Caco-2 (cell line): ENCODE measurements at regions of chr9 and their contacts with region 1.

Region 1: DNA sequence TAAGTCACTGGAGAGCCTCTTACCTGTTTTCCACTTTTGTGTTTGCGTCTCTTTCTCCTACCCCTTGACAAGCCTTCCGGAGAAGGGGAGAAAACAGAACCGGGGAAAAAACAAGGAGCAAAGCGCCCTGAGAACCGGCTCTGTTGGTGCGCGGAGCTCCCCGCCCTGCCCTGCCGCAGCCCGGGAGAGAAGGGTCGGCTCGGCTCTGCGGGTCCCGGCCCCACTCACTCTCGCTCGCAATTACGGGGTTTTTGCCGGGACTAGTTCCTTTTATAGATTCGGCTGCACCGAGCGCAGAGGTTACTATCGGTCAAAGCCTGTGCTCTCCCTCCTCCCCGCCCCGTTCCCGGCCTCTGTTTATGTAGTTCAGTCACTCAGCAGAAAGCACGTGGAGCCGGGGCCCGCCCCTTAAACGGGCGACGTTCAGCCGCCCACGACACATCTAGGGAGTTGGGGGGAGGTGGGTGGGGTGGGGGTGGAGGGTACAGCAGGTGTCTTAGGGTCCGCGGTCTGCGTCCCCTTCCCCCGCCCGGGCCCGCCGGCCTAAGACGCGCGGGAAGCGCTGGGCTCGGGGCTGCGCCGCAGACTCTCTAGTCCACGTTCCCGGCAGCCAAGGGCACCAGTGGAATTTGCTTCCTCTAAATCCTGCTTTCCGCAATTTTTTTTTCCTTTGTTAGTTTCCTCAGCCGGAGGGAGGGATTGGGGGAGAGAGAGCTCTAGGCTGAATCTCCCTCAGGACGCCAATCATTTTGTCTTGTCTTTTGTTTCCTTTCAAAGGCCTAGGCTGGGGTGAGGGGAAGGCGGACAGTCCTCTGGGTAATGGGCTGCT is at the start of gene ABCA1:
- DNase-seq: peak; percentile 80 to 85
- H3K4me3 ChIP-seq: peak within 1 kb of the TSS; percentile 73
- H3K4me3 Mint-ChIP-seq: peak within 1 kb of the TSS; percentile 94
- H3K27ac Mint-ChIP-seq: peak within 1 kb of the TSS; percentile 51
- H3K4me1 ChIP-seq: peaks cover 9% of the 10 kb centered on the region
- H3K4me1 Mint-ChIP-seq: peaks cover 13% of the 10 kb centered on the region
- H3K27me3 ChIP-seq: no peaks in the 10 kb centered on the region
- H3K27me3 Mint-ChIP-seq: no peaks in the 10 kb centered on the region
- CTCF ChIP-seq: no peak
- total RNA-seq, gene ABCA1: 14.0 and 20.7 TPM in 2 replicates

Region 2: GRCh38 chr9:104572612-104573011 is 355.5 kb before region 1 on chr9:
- CTCF ChIA-PET with region 1: no interaction called
- POLR2A ChIA-PET with region 1: no interaction called
- intact Hi-C with region 1: no loop called
- DNase-seq: no peak
- H3K4me3 ChIP-seq: no peak overlapping the region
- H3K4me3 Mint-ChIP-seq: no peak overlapping the region
- H3K27ac Mint-ChIP-seq: no peak overlapping the region
- H3K4me1 ChIP-seq: no peaks in the 10 kb centered on the region
- H3K4me1 Mint-ChIP-seq: no peaks in the 10 kb centered on the region
- H3K27me3 ChIP-seq: no peaks in the 10 kb centered on the region
- H3K27me3 Mint-ChIP-seq: no peaks in the 10 kb centered on the region
- CTCF ChIP-seq: no peak

Region 3: GRCh38 chr9:104863180-104863883 is 64.8 kb before region 1 on chr9:
- CTCF ChIA-PET with region 1: interaction called, 10 read pairs
- POLR2A ChIA-PET with region 1: no interaction called
- intact Hi-C with region 1: loop called (anchors 1 kb)
- DNase-seq: peak; percentile 62 to 69
- H3K4me3 ChIP-seq: no peak overlapping the region
- H3K4me3 Mint-ChIP-seq: no peak overlapping the region
- H3K27ac Mint-ChIP-seq: no peak overlapping the region
- H3K4me1 ChIP-seq: 0 out of 2 replicates have a peak, but pooled peaks cover 11% of the 10 kb centered on the region
- H3K4me1 Mint-ChIP-seq: peaks cover 19% of the 10 kb centered on the region
- H3K27me3 ChIP-seq: no peaks in the 10 kb centered on the region
- H3K27me3 Mint-ChIP-seq: no peaks in the 10 kb centered on the region
- CTCF ChIP-seq: peak; percentile 68 to 85

Region 4: DNA sequence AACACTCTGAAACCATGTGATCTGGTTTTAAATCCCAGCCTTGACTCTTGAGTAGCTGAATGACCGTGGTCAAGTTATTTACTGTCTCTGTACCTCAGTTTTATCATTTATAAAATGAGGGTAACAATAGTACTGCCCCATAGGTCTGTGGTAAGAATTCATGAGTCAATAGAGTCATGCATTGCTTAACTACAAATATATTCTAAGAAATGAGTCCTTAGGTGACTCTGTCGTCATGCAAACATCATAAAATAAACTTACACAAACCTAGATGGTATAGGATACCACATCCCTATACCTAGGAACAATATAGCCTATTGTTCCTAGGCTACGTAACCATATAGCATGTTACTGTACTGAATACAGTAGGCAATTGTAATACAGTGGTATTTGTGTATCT is 20.2 kb after region 1 on chr9:
- CTCF ChIA-PET with region 1: no interaction called
- POLR2A ChIA-PET with region 1: no interaction called
- intact Hi-C with region 1: no loop called
- DNase-seq: no peak
- H3K4me3 ChIP-seq: no peak overlapping the region
- H3K4me3 Mint-ChIP-seq: no peak overlapping the region
- H3K27ac Mint-ChIP-seq: no peak overlapping the region
- H3K4me1 ChIP-seq: no peaks in the 10 kb centered on the region; the same call in 1 of the 2 replicates
- H3K4me1 Mint-ChIP-seq: peaks cover 5% of the 10 kb centered on the region
- H3K27me3 ChIP-seq: no peaks in the 10 kb centered on the region
- H3K27me3 Mint-ChIP-seq: no peaks in the 10 kb centered on the region
- CTCF ChIP-seq: no peak

Region 5: DNA sequence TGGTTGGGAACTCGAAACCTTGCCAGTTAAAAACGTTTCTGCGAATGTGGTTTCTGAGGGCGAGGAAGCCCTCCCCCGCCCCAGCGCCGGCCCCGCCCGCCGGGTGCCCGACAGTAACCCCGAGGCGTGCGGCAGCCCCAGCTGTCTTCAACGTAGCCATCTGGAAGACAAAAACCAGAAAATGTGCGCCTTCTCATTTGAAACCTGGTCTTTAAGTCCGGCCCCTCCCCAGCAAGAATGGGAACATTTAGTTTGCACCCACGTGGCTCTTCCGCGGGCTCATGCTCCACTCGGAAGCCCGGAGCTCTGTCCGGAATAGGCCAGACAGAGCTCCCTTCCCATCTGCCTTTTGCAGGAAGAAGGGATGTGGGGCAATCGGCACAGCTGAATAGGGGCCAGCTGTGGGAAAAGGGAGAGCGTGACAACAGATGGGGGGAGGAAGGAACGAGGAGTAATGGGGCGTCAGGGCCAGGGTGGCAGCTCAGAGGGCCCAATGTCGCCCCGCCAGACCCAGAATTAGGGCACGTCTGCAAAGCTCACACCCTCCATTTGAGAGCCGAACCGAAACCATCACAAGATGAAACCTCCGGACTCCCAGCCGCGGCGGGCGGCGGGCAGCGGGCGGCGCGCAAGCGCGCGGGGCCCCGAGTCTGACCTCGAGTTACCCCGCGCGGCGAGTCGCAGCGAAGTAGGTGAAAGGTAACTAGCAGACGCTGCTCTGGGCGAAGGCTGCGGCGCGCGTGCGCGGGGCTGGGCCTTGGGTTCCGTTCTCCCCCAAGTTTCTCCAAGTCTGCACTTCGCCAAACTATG is 63.2 kb after region 1 on chr9:
- CTCF ChIA-PET with region 1: interaction called, 5 read pairs
- POLR2A ChIA-PET with region 1: interaction called, 7 read pairs
- intact Hi-C with region 1: loop called (anchors 1 kb)
- DNase-seq: peak; percentile 84 to 85
- H3K4me3 ChIP-seq: peak overlapping the region; percentile 68
- H3K4me3 Mint-ChIP-seq: peak overlapping the region; percentile 96
- H3K27ac Mint-ChIP-seq: peak overlapping the region; percentile 82
- H3K4me1 ChIP-seq: peaks cover 29% of the 10 kb centered on the region
- H3K4me1 Mint-ChIP-seq: peaks cover 17% of the 10 kb centered on the region
- H3K27me3 ChIP-seq: no peaks in the 10 kb centered on the region
- H3K27me3 Mint-ChIP-seq: no peaks in the 10 kb centered on the region
- CTCF ChIP-seq: no peak

Region 6: DNA sequence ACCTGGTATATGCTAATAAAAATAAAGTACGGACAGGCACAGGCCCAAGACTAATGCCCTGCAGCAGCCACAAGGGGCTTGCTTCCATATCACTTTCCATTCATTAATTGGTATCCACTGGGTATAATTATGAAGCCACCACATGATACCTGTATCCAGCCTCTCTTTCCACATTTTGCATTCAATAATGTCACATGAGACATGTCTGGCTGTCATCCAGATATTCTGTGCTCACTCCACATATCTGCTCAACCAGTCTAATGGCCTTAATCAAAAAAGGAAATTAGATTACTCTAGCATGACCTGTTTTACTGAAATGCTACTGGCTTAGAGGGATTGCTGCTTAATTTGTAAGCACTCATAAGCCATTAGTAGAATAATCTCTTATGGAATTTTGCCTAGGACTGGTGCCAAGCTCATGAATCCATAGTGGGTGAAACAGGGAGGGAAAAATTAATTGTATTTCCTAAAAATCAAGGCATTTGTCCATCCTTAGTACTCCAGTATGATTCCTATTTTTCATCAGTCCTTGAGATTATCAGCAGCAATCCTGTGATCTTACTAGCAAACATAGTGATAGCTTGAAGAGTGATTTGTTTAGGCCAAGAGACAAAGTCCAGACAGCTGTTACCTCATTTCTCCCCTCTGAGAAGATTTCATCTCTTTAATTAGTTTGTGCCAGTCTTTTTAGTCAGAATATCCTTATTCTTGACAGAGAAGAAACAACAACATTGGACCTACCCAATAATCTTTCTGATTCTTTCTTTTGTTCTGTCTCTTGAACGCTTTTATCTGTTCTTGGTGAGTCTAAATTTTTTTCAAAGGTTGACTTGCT is 119.0 kb after region 1 on chr9:
- CTCF ChIA-PET with region 1: no interaction called
- POLR2A ChIA-PET with region 1: no interaction called
- intact Hi-C with region 1: loop called (anchors 2 kb)
- DNase-seq: peak in 1 of 2 experiments; percentile 36
- H3K4me3 ChIP-seq: no peak overlapping the region
- H3K4me3 Mint-ChIP-seq: peak overlapping the region; percentile 9
- H3K27ac Mint-ChIP-seq: peak overlapping the region; percentile 12
- H3K4me1 ChIP-seq: peaks cover 34% of the 10 kb centered on the region
- H3K4me1 Mint-ChIP-seq: peaks cover 46% of the 10 kb centered on the region
- H3K27me3 ChIP-seq: no peaks in the 10 kb centered on the region
- H3K27me3 Mint-ChIP-seq: no peaks in the 10 kb centered on the region
- CTCF ChIP-seq: no peak

Region 7: GRCh38 chr9:105087910-105088888 is 160.1 kb after region 1 on chr9:
- CTCF ChIA-PET with region 1: interaction called, 3 read pairs
- POLR2A ChIA-PET with region 1: no interaction called
- intact Hi-C with region 1: loop called (anchors 1 kb)
- DNase-seq: peak; percentile 69 to 74
- H3K4me3 ChIP-seq: no peak overlapping the region
- H3K4me3 Mint-ChIP-seq: peak overlapping the region; percentile 37
- H3K27ac Mint-ChIP-seq: peak overlapping the region; percentile 84
- H3K4me1 ChIP-seq: peaks cover 48% of the 10 kb centered on the region
- H3K4me1 Mint-ChIP-seq: peaks cover 28% of the 10 kb centered on the region
- H3K27me3 ChIP-seq: no peaks in the 10 kb centered on the region
- H3K27me3 Mint-ChIP-seq: no peaks in the 10 kb centered on the region
- CTCF ChIP-seq: no peak

Region 8: DNA sequence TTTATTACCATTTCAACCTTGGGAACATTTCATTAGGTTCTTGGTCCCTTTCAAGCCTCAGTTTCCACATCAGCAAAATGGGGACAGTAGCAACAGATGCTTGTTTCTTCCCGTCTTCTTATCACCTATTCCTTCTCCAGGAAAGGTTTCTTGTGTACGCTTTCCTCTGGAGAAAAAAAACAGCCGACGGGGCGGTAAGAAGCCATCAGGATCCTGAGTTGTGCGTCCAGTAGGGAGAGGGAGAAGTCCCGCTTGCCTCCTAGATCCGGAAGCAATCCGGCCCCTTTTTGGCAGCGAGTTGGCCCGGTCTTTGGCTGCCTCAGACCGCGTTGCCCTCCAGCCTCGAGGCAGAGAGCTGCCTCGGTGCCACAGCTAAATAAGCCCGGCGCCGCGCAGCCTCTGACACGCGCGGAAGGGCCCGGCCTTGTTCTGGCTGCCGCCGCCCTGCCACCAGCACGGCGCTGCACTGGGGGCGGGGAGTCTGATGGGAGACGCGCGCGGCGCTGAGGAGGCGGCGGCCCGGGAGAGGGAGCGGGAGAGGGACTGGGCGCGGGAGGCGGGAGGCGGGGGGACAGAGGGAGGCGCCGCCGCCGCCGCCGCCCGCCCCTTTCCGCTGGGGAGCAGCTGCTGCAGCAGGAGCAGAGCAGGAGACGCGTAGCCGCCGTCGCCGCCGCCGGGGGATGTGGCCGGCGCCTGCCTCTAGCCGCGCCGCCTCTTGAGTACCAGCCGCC is 316.0 kb after region 1 on chr9 and contains the start of gene SLC44A1:
- CTCF ChIA-PET with region 1: interaction called, 3 read pairs
- POLR2A ChIA-PET with region 1: interaction called, 4 read pairs
- intact Hi-C with region 1: loop called (anchors 2 kb)
- DNase-seq: peak; percentile 97 to 98
- H3K4me3 ChIP-seq: peak within 1 kb of the TSS; percentile 76
- H3K4me3 Mint-ChIP-seq: peak within 1 kb of the TSS; percentile 97
- H3K27ac Mint-ChIP-seq: peak within 1 kb of the TSS; percentile 91
- H3K4me1 ChIP-seq: peaks cover 14% of the 10 kb centered on the region
- H3K4me1 Mint-ChIP-seq: peaks cover 23% of the 10 kb centered on the region
- H3K27me3 ChIP-seq: no peaks in the 10 kb centered on the region
- H3K27me3 Mint-ChIP-seq: no peaks in the 10 kb centered on the region
- CTCF ChIP-seq: no peak
- total RNA-seq, gene SLC44A1: 45.8 and 46.3 TPM in 2 replicates

Region 9: GRCh38 chr9:105414947-105415661 is 487.0 kb after region 1 on chr9:
- CTCF ChIA-PET with region 1: interaction called, 4 read pairs
- POLR2A ChIA-PET with region 1: interaction called, 3 read pairs
- intact Hi-C with region 1: loop called (anchors 1 kb)
- DNase-seq: peak; percentile 63 to 65
- H3K4me3 ChIP-seq: no peak overlapping the region
- H3K4me3 Mint-ChIP-seq: peak overlapping the region; percentile 56
- H3K27ac Mint-ChIP-seq: no peak overlapping the region
- H3K4me1 ChIP-seq: peaks cover 22% of the 10 kb centered on the region
- H3K4me1 Mint-ChIP-seq: peaks cover 14% of the 10 kb centered on the region
- H3K27me3 ChIP-seq: no peaks in the 10 kb centered on the region
- H3K27me3 Mint-ChIP-seq: no peaks in the 10 kb centered on the region
- CTCF ChIP-seq: peak; percentile 86 to 94